HepG2 (cell line): ENCODE measurements at regions of chr19 and their contacts with region 1.

Region 1: GRCh38 chr19:8697671-8698432 is 743 bp downstream of the ACTL9 start:
- DNase-seq: no peak
- ATAC-seq: no peak
- H3K4me3 ChIP-seq: no peak overlapping the region
- H3K27ac ChIP-seq: no peak overlapping the region
- H3K4me1 ChIP-seq: no peaks in the 10 kb centered on the region
- H3K27me3 ChIP-seq: no peaks in the 10 kb centered on the region; a peak in 1 of 5 replicates
- CTCF ChIP-seq: peak; percentile 62
- EP300 ChIP-seq: no peak
- POLR2A ChIP-seq: no peak
- RAD21 ChIP-seq: no peak

Region 2: GRCh38 chr19:8580710-8581281 is 117.1 kb before region 1 on chr19:
- CTCF ChIA-PET with region 1: interaction called, 21 read pairs
- POLR2A ChIA-PET with region 1: interaction called, 5 read pairs
- in situ Hi-C with region 1: no loop called
- intact Hi-C with region 1: no loop called
- DNase-seq: peak; percentile 63
- ATAC-seq: peak; percentile 71
- H3K4me3 ChIP-seq: no peak overlapping the region; a peak in 1 of 6 replicates
- H3K27ac ChIP-seq: no peak overlapping the region
- H3K4me1 ChIP-seq: peaks cover 40% of the 10 kb centered on the region
- H3K27me3 ChIP-seq: peaks cover 0 to 11% of the 10 kb centered on the region in 2 experiments; a peak in 2 of 5 replicates
- CTCF ChIP-seq: peak; percentile 95
- EP300 ChIP-seq: no peak
- POLR2A ChIP-seq: no peak
- RAD21 ChIP-seq: peak; percentile 92

Region 3: GRCh38 chr19:8615813-8616596 is 81.8 kb before region 1 on chr19:
- CTCF ChIA-PET with region 1: interaction called, 4 read pairs
- POLR2A ChIA-PET with region 1: no interaction called
- in situ Hi-C with region 1: no loop called
- intact Hi-C with region 1: loop called (anchors 1 kb)
- DNase-seq: peak; percentile 62
- ATAC-seq: peak; percentile 43; the same call in 2 of the 3 replicates
- H3K4me3 ChIP-seq: no peak overlapping the region
- H3K27ac ChIP-seq: no peak overlapping the region
- H3K4me1 ChIP-seq: peaks cover 22% of the 10 kb centered on the region
- H3K27me3 ChIP-seq: no peaks in the 10 kb centered on the region
- CTCF ChIP-seq: peak; percentile 86
- EP300 ChIP-seq: no peak
- POLR2A ChIP-seq: no peak
- RAD21 ChIP-seq: peak; percentile 73

Region 4: DNA sequence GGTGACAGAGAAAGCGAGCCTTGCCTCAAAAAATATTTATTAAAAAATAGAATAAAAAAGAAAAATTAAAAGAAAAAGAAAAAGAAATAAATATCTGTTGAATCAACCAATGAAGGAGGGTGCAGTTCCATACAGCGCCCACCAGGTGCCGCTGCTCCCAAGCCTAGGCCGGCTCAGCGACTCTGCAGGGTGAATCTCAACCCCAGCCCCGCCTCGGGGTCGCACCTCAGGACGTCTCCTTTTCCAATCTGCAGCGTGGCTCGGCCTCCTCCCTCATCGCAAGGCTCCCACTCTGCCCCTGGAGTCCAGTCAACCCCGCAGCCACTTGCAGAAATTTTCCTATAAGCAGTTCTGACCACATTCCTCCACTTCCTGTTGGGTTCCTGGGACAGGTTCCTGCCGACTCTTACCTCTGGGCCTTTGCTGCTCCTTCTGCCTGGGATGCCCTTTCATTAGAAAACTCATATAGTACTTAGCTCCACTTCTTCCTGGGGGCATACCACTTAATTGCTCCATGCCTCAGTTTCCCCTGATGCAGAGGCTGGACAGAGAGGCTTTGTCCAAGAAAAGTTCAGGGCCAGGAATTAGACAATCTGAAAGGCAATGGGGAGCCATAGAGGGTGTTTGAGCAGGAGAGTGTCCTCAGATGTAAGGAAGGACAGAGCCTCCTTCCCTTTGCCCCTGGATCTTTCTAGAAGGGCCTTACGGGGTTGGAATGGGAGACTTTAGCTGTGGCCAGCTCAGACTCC is 43.1 kb before region 1 on chr19:
- CTCF ChIA-PET with region 1: interaction called, 26 read pairs
- POLR2A ChIA-PET with region 1: no interaction called
- in situ Hi-C with region 1: loop called (anchors 5 kb)
- intact Hi-C with region 1: loop called (anchors 1 kb)
- DNase-seq: no peak
- ATAC-seq: peak; percentile 69
- H3K4me3 ChIP-seq: peak overlapping the region; percentile 32 to 65 (median 44); a peak in 3 of 6 replicates
- H3K27ac ChIP-seq: no peak overlapping the region
- H3K4me1 ChIP-seq: 0 out of 2 replicates have a peak, but pooled peaks cover 5% of the 10 kb centered on the region
- H3K27me3 ChIP-seq: peaks cover 0 to 40% of the 10 kb centered on the region in 2 experiments; a peak in 3 of 5 replicates
- CTCF ChIP-seq: peak; percentile 80
- EP300 ChIP-seq: no peak
- POLR2A ChIP-seq: no peak
- RAD21 ChIP-seq: peak; percentile 71

Region 5: GRCh38 chr19:8738377-8738776 is 40.5 kb after region 1 on chr19:
- CTCF ChIA-PET with region 1: no interaction called
- POLR2A ChIA-PET with region 1: no interaction called
- in situ Hi-C with region 1: no loop called
- intact Hi-C with region 1: no loop called
- DNase-seq: no peak
- ATAC-seq: no peak
- H3K4me3 ChIP-seq: no peak overlapping the region
- H3K27ac ChIP-seq: no peak overlapping the region
- H3K4me1 ChIP-seq: no peaks in the 10 kb centered on the region
- H3K27me3 ChIP-seq: no peaks in the 10 kb centered on the region
- CTCF ChIP-seq: no peak
- EP300 ChIP-seq: no peak
- POLR2A ChIP-seq: no peak
- RAD21 ChIP-seq: no peak